GM12878 (cell line): ENCODE measurements at regions of chr2 and their contacts with region 1.

Region 1: DNA sequence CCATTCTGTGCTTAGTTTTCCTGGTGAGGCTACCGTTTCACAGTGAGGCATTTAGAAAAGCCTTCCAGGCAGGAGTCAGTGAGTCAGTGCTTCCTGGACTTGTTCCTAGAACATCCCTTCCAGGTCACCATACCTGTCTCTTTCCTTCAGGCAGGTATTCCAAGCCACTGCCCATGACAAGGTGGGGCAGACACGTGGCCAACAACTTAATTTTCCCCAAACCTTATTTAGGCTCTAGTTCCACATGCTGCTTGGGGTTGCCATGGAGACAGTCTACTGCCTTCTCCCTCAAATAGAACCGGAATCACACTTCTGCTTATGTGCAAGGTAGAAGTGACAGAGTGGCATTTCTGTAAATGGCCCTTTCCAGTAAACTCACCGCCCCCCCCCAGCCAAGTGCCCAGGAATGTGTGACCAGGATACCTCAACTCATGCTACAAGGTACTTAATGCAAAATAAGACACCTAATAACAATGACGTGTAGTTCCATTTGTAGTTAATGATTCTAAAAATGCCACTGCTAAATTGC is 258.3 kb downstream of the PRKCE start:
- DNase-seq: no peak
- ATAC-seq: peak; percentile 90
- H3K4me3 ChIP-seq: peak overlapping the region; percentile 13; the same call in 1 of the 2 replicates
- H3K27ac ChIP-seq: peak overlapping the region; percentile 66
- H3K4me1 ChIP-seq: peaks cover 35% of the 10 kb centered on the region
- H3K27me3 ChIP-seq: no peaks in the 10 kb centered on the region
- CTCF ChIP-seq: no peak
- EP300 ChIP-seq: peak; percentile 31 to 38; a peak in 2 of 4 replicates
- POLR2A ChIP-seq: no peak
- RAD21 ChIP-seq: 0 out of 2 replicates have a peak, but pooled peaks have one; percentile 18

Region 2: DNA sequence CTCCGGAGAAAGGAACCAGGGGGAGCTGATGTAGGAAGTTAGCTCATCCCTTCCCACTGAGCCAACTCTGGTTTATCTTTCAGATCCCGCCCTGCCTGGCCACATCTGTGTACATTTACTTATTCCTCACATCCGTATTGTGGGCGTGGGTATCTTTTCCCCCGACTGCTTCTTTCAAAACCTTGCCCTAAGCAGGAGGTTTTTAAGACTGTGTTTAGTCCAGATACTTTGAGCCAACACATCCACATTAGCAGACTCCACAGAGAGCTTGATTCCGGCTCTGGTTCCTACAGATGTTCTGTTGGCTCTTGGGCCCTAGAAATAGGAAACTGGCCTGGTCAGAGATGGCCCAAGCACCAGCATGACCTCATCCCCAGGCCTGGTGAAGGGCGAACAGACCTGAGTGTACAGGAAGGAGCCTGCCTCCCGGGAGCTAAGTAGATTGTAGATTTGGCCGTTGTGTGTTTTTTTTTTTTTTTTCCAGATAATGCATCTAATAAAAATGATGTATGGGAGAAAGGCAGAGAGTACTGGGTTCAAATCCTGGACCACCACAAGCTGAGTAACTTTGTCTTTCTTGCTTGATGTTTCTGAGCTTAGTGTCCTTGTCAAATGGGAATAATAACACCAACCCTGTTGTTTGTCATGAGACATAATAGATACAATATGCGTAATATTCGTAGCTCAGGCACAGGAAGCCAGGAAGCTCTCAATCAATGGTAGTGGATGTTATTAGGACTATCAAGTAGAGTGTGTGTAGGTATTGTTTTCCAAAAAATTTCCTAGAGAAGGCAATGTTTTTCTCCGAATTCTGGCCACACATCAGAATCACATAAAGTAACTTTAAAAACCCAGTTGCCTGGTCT is 166.0 kb before region 1 on chr2:
- CTCF ChIA-PET with region 1: no interaction called
- POLR2A ChIA-PET with region 1: no interaction called
- RAD21 ChIA-PET with region 1: no interaction called
- SMC1A ChIA-PET with region 1: no interaction called
- in situ Hi-C with region 1: no loop called
- intact Hi-C with region 1: no loop called
- DNase-seq: no peak
- ATAC-seq: no peak
- H3K4me3 ChIP-seq: no peak overlapping the region
- H3K27ac ChIP-seq: no peak overlapping the region
- H3K4me1 ChIP-seq: peaks cover 9% of the 10 kb centered on the region
- H3K27me3 ChIP-seq: no peaks in the 10 kb centered on the region
- CTCF ChIP-seq: no peak
- EP300 ChIP-seq: no peak
- POLR2A ChIP-seq: no peak
- RAD21 ChIP-seq: no peak

Region 3: GRCh38 chr2:45930396-45930792 is 20.7 kb after region 1 on chr2:
- CTCF ChIA-PET with region 1: interaction called, 6 read pairs
- POLR2A ChIA-PET with region 1: interaction called, 3 read pairs
- RAD21 ChIA-PET with region 1: interaction called, 6 read pairs
- SMC1A ChIA-PET with region 1: interaction called, 16 read pairs
- in situ Hi-C with region 1: no loop called
- intact Hi-C with region 1: no loop called
- DNase-seq: no peak
- ATAC-seq: no peak
- H3K4me3 ChIP-seq: no peak overlapping the region
- H3K27ac ChIP-seq: no peak overlapping the region
- H3K4me1 ChIP-seq: peaks cover 12% of the 10 kb centered on the region
- H3K27me3 ChIP-seq: no peaks in the 10 kb centered on the region
- CTCF ChIP-seq: no peak
- EP300 ChIP-seq: no peak
- POLR2A ChIP-seq: no peak
- RAD21 ChIP-seq: no peak